Mammary epithelial cell (primary cell): ENCODE measurements at regions of chr9 and their contacts with region 1.

Region 1: GRCh38 chr9:74095925-74096324 is 401.2 kb upstream of the RORB start:
- DNase-seq: no peak
- H3K4me3 ChIP-seq: no peak overlapping the region
- H3K27ac ChIP-seq: no peak overlapping the region
- H3K4me1 ChIP-seq: no peaks in the 10 kb centered on the region
- H3K27me3 ChIP-seq: no peaks in the 10 kb centered on the region
- CTCF ChIP-seq: no peak

Region 2: DNA sequence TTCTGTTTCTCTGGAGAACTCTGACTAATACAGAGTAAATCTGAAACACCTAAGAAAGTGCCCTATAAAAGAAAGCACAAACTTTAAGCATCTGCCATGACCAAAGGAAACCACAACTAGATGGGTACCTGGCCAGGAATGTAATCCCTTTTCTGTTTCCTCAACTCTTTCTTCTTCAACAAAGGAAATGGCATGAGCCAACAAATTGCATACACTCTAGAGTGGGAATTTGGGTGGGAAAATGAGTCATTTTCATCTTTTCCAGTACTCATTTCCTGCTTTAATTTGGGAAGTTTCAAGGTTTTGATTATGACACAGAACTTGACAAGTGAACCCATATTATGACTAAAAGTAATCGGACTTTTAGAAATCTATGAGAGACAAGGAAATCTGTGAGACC is 52.0 kb after region 1 on chr9:
- CTCF ChIA-PET with region 1: no interaction called
- dilution Hi-C with region 1: no loop called
- in situ Hi-C with region 1: loop called in 1 of 2 experiments (anchors 10 kb)
- intact Hi-C with region 1: no loop called
- DNase-seq: peak; percentile 2
- H3K4me3 ChIP-seq: no peak overlapping the region
- H3K27ac ChIP-seq: no peak overlapping the region
- H3K4me1 ChIP-seq: no peaks in the 10 kb centered on the region
- H3K27me3 ChIP-seq: no peaks in the 10 kb centered on the region
- CTCF ChIP-seq: no peak

Region 3: GRCh38 chr9:74277532-74277931 is 181.6 kb after region 1 on chr9:
- CTCF ChIA-PET with region 1: no interaction called
- dilution Hi-C with region 1: no loop called
- in situ Hi-C with region 1: no loop called
- intact Hi-C with region 1: no loop called
- DNase-seq: no peak
- H3K4me3 ChIP-seq: no peak overlapping the region
- H3K27ac ChIP-seq: no peak overlapping the region
- H3K4me1 ChIP-seq: no peaks in the 10 kb centered on the region
- H3K27me3 ChIP-seq: no peaks in the 10 kb centered on the region
- CTCF ChIP-seq: no peak